WTC11 (cell line): ENCODE measurements at regions of chr3 and their contacts with region 1.

Region 1: GRCh38 chr3:40505599-40506462 is at the start of gene ZNF620:
- DNase-seq: peak; percentile 88
- ATAC-seq: peak; percentile 99
- H3K4me3 Mint-ChIP-seq: peak within 1 kb of the TSS; percentile 93
- H3K27ac Mint-ChIP-seq: peak within 1 kb of the TSS; percentile 96
- H3K4me1 Mint-ChIP-seq: peaks cover 17% of the 10 kb centered on the region
- H3K27me3 Mint-ChIP-seq: peaks cover 2% of the 10 kb centered on the region; the same call in 1 of the 2 replicates
- CTCF ChIP-seq: no peak
- total RNA-seq, gene ZNF620: 15.6 to 19.8 TPM (median 17.2 TPM) in 3 replicates

Region 2: GRCh38 chr3:40465456-40465855 is 40.4 kb before region 1 on chr3:
- CTCF ChIA-PET with region 1: no interaction called
- POLR2A ChIA-PET with region 1: no interaction called
- DNase-seq: no peak
- ATAC-seq: peak; percentile 24
- H3K4me3 Mint-ChIP-seq: no peak overlapping the region
- H3K27ac Mint-ChIP-seq: peak overlapping the region; percentile 57
- H3K4me1 Mint-ChIP-seq: peaks cover 10% of the 10 kb centered on the region
- H3K27me3 Mint-ChIP-seq: no peaks in the 10 kb centered on the region
- CTCF ChIP-seq: no peak

Region 3: DNA sequence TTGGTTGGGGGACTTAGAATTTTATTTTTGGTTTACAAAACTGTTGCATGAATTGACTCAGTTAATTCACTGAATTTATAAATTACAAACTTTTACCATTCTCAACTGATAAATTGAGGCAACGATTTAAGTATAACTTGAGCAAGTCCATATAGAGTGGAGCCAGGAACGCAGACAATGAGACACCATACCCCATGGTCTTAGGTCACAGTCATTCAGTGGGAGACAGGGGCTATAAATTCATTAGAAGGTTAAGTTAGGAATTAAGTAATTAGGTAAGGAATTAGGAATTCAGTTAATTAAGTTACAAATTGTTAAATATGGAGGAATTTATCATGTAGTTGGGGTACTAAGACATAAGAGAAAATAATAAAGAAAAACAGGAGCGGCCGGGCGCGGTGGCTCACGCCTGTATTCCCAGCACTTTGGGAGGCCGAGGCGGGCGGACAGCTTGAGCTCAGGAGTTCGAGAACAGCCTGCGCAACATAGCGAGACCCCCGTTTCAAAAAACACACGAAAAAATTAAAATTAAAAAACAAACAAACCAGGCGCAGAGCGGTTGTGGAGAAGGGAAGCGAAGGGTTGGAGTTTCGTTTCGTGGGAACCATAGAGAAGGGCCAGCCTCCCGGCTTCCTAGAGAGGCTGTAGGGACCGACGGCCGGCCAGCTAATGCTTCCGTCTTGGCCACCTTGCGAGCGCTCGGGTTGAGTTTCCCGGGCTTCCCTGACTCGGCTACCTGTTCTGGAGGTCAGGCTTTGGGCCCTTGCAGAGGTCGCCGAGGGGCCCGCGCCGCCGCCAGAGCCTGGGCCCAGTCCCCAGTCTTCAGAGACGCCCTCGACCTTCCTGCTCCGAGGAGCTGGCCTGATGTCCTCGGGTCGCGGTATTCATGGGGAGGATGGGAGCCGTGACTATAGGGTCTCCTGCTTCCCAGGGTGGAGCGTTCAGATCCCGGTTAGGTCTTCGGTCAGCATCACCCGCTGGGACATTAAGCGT is 29.1 kb before region 1 on chr3 and contains the start of gene ZNF619:
- CTCF ChIA-PET with region 1: interaction called, 18 read pairs
- POLR2A ChIA-PET with region 1: interaction called, 3 read pairs
- DNase-seq: peak; percentile 72
- ATAC-seq: peak; percentile 84
- H3K4me3 Mint-ChIP-seq: peak within 1 kb of the TSS; percentile 83
- H3K27ac Mint-ChIP-seq: peak within 1 kb of the TSS; percentile 84
- H3K4me1 Mint-ChIP-seq: peaks cover 16% of the 10 kb centered on the region
- H3K27me3 Mint-ChIP-seq: no peaks in the 10 kb centered on the region
- CTCF ChIP-seq: no peak
- total RNA-seq, gene ZNF619: 7.2 to 11.2 TPM (median 9.7 TPM) in 3 replicates

Region 4: GRCh38 chr3:40494698-40495097 is 11.1 kb before region 1 on chr3:
- CTCF ChIA-PET with region 1: interaction called, 22 read pairs
- POLR2A ChIA-PET with region 1: no interaction called
- DNase-seq: no peak
- ATAC-seq: no peak
- H3K4me3 Mint-ChIP-seq: no peak overlapping the region
- H3K27ac Mint-ChIP-seq: no peak overlapping the region
- H3K4me1 Mint-ChIP-seq: peaks cover 5% of the 10 kb centered on the region
- H3K27me3 Mint-ChIP-seq: no peaks in the 10 kb centered on the region
- CTCF ChIP-seq: no peak

Region 5: DNA sequence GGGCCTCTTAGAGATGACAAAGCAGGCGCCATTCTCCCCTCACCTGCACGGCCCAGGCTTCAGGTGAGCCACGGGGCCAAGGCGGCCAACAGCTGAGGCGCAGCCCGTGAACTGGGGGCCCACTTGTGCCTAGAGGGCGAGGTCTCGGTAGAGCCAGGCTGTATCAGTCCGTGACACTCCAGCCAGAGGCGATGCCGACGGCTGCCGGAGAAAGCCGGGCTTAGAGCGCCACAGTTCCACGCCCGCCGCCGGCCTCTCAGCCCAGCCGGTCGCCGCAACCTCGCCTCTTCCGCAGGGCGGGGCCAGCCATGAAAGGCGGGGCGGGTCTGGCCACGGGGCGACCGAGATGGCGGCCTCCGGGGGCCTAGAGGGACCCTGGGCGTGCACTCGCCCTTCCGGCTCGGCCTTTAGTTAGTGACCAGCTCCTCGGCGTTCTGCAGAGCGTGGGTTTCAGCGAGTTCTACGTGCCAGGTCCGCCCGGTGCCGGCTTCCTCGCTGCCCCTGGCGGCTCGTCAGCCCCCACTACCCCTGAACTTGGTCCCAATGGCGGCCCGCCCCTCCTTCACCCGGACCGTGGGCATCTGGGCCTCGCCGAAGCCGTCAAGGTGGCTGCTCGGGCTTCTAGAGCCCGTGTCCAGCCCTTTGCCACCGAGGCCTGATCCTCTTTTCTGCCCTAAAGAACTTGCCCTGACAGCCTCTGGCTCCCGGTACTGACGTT is 18.9 kb after region 1 on chr3 and contains the start of gene ZNF621:
- CTCF ChIA-PET with region 1: interaction called, 15 read pairs
- POLR2A ChIA-PET with region 1: interaction called, 24 read pairs
- DNase-seq: peak; percentile 90
- ATAC-seq: peak; percentile 99
- H3K4me3 Mint-ChIP-seq: peak within 1 kb of the TSS; percentile 96
- H3K27ac Mint-ChIP-seq: peak within 1 kb of the TSS; percentile 96
- H3K4me1 Mint-ChIP-seq: peaks cover 16% of the 10 kb centered on the region
- H3K27me3 Mint-ChIP-seq: no peaks in the 10 kb centered on the region
- CTCF ChIP-seq: no peak
- total RNA-seq, gene ZNF621: 17.7 to 20.5 TPM (median 20.0 TPM) in 3 replicates